Left cardiac atrium (tissue), 4 donors: ENCODE measurements at regions of chr11 and their contacts with region 1.

Region 1: GRCh38 chr11:119356349-119357031 is 10.0 kb upstream of the MFRP start:
- DNase-seq: peak; percentile 88
- ATAC-seq: peak; percentile 79 to 84

Region 2: DNA sequence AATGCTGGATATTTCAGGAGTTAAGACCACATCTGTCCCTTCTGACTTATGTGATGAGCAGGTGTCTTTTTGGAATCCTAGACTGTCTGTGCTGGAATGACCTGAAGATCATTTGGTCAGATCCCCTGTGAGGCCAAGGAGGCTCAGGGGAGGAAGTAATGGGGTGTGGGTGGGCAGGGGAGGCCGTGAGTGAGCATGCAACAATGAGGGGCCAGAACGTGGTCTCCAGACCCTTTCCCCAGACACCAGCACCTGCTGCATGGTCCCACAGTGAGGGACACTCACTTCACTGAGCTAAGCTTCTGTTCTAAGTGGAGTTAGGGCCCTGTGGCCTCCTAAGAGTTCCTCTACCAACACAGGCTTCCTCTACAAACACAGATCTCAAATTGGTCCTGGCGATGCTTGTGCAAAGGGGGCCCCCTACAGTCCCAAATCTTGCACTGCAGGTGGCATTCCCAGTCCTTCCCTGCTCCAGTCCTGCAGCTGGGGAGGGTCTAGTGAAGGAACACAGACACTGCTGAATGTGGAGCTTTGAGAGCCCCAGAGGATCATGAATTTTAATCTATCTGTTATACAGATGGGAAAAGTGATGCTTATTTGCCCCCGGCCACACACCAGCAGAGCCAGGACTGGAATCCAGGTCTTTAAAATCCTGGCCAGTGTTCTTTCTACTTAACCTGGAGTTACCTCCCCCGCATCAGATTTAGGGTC is 17.6 kb after region 1 on chr11:
- intact Hi-C with region 1: loop called in 1 of 2 experiments (anchors 2 kb)
- DNase-seq: peak; percentile 59
- ATAC-seq: peak in 1 of 2 donors; percentile 11

Region 3: DNA sequence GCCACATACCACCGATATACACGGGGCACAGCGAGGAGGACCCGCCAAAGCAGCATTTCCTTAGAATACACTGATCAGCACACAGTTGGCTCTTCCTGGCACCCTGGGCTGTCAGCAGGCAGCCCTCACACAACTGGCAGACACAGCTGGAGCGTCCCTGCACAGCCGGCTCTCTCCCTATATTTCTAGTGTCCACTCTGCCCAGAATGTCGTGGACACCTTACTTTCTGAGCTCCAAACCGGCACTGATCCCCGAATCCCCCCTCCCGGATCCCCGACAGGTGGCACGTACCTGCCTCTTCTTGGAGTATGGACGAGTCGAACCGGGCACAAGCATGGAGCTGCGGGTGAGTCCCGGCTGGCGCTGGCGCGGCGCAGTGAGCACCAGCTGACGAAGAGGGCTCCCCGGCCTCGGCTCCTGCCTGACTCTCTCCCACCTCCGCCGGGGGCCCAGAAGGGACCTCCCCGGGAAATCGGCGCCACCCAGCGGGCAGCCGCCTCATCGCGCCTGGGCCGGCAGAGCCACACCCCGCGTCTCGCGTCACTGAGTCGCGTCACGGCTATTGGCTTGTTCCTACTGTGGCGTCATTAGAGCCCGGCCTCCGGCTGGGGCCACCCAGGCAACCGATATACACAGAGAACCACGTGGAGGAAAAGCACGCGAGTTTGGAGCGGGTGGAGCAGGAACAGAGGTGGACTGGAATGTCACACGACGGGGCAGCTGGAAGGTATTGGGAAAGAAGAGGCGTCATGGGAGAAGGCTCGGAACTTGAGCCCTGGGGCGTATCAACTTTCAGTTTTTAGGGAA is 24.9 kb after region 1 on chr11 and contains the start of gene USP2:
- intact Hi-C with region 1: loop called in 1 of 2 experiments (anchors 2 kb)
- DNase-seq: peak; percentile 98
- ATAC-seq: peak; percentile 96
- total RNA-seq, gene USP2: 65.8 to 68.8 TPM

Region 4: DNA sequence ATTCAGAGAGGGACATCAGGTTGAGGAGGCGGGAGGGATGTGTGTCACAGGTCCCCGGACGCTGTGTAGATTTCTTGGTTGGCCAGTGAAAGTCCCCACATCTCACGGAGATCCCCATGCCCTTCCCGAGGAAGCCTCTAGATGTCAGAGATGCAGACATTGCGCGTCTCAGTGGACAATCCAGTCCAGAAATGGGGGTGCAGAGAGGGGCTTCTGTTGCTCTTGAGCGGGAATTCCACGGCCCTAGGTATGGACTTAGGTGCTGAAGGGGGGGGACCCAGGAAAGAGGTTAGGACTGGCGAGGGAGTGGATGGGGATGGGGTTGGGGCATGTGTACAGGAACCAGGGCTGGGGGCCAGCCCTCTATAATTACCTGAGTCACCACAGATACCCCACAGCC is 59.5 kb after region 1 on chr11:
- intact Hi-C with region 1: no loop called
- DNase-seq: no peak
- ATAC-seq: no peak

Region 5: DNA sequence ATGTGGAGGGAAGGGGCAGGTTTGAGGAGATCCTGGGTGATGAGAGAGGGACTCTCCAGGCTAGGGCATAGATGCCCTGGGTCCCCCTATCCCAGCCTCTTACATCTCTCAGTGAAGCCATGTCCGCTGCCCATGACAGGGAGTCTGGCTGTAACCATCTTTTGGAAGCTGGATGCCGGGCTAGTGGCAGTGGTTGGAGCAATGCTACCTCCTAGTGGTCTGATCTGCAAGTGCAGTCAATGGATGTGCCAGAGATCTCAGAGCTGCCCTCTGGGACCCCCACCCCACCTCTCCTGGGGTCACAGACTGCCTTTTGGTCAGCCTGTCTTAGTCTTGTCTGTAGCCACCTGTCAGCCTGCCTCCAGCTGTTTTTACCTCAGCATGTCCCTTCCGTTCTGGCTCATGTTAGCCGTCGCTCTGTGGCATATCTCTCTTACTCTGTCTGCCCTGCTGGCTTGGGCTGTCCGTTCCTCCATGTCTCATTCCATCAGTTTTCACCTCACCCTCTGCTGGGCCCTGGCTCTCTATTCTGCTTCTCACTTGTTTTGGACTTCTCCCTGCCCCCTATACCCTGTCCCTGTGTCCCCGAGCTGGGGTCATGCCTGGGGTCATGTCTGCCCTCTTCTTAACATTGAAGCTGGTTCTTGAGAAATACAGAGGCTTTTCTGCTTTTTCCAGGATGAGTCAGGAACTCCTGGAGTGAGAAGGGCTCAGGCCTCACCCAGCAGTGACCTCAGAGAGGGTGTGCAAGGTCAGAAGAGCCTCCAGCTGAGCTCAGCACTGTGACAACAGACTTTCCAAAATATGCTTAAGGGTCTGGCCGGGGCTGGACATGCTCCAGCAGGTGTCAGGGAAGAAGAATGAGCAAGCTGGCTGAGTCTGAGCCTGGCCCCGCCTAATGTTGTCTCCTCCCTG is 118.4 kb after region 1 on chr11:
- intact Hi-C with region 1: loop called in 1 of 2 experiments (anchors 5 kb)
- DNase-seq: peak; percentile 62
- ATAC-seq: peak; percentile 76

Region 6: DNA sequence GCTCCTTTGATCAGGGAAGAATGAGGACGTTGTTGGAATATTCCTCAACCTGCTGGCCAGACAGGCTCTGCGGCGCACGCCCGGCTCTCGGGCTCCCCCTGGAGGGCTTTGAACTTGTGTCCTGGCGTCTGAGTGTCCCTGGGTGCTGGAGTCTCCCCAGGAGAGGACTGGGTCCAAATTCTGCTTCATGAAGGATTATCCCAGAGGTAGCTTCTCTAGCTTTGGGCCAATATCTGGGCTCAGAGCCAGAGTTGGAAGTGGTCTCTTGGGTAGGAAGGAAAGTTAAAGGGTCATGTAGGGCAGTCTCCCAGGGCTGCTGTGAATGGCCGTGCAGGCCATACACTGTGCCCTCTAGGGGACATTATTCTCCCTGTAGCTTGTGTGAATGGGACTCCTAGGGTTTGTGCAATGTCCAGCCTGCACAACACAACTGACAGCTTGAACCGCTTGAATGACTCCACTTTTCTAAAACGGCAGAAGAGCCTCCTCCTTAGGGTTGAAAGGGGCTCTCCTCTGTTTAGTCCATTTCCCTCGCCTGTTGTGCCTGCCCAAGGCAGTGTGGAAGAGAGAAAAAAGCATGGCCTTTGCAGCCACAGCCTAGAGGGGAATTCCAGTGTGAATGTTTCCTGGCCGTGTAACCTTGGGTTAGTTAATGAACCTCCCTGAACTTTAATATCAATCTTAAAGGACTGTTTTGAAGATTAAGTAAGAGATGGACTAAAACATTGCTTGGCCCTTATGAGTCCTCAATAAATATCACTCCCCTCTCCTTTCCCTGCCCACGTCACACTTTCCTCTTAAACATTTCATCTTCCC is 177.6 kb after region 1 on chr11:
- intact Hi-C with region 1: no loop called
- DNase-seq: peak; percentile 76
- ATAC-seq: peak; percentile 82 to 91